ENCODE measurements at regions of chr12 and their contacts with region 1.

Region 1: DNA sequence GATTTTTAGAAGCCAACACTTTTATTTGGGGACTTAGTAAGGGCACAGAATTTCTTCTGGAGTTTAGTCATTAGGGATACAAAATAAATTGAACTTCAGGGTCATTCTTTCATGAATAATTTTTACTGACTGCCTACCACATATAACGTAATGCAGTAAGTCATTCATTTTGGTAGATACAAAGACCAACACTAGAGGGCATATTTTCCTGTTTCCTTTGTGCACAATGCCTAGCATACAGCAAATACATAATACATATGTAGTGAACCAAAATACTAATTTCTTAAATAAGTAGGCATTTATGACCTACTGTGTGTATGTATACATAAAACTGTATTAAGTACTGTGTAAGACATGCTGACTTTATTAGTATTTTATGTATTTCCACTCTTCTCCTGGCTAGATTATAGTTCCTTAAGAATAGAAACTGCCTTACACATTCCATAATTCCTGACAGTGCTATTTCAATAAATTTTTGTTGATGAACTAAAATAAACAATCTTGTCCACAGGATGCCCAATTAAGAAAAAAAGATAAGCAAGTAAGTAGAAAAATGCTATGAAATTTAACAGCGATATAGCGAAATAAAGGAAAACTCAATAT is 47.9 kb downstream of the PPP1R12A start:
- DNase-seq: no peak
- ATAC-seq: peak in 1 of 2 donors; percentile 61
- H3K4me3 ChIP-seq: no peak overlapping the region
- H3K27ac ChIP-seq: no peak overlapping the region
- H3K4me1 ChIP-seq: peaks cover 40 to 56% of the 10 kb centered on the region in 2 donors
- H3K27me3 ChIP-seq: no peaks in the 10 kb centered on the region
- CTCF ChIP-seq: peak; percentile 13 to 61 (median 37)
- POLR2A ChIP-seq: no peak

Region 2: GRCh38 chr12:79194595-79194994 is 692.4 kb before region 1 on chr12:
- in situ Hi-C with region 1: no loop called
- intact Hi-C with region 1: no loop called
- DNase-seq: no peak
- ATAC-seq: no peak
- H3K4me3 ChIP-seq: no peak overlapping the region
- H3K27ac ChIP-seq: no peak overlapping the region
- H3K4me1 ChIP-seq: no peaks in the 10 kb centered on the region
- H3K27me3 ChIP-seq: no peaks in the 10 kb centered on the region
- CTCF ChIP-seq: no peak
- POLR2A ChIP-seq: no peak

Region 3: GRCh38 chr12:79834712-79835376 is 52.2 kb before region 1 on chr12:
- in situ Hi-C with region 1: no loop called
- intact Hi-C with region 1: no loop called
- DNase-seq: no peak
- ATAC-seq: peak in 1 of 2 donors; percentile 8
- H3K4me3 ChIP-seq: no peak overlapping the region
- H3K27ac ChIP-seq: no peak overlapping the region
- H3K4me1 ChIP-seq: peaks cover 15 to 19% of the 10 kb centered on the region in 2 donors
- H3K27me3 ChIP-seq: no peaks in the 10 kb centered on the region
- CTCF ChIP-seq: no peak
- POLR2A ChIP-seq: no peak

Region 4: GRCh38 chr12:79935021-79935623 is 48.1 kb after region 1 on chr12 and contains the start of gene PPP1R12A:
- in situ Hi-C with region 1: no loop called
- intact Hi-C with region 1: loop called (anchors 2 kb)
- DNase-seq: peak; percentile 93 to 94
- ATAC-seq: peak; percentile 91 to 93
- H3K4me3 ChIP-seq: peak within 1 kb of the TSS; percentile 78 to 95 (median 92)
- H3K27ac ChIP-seq: peak within 1 kb of the TSS; percentile 89 to 95 (median 92)
- H3K4me1 ChIP-seq: peaks cover 27 to 40% of the 10 kb centered on the region in 2 donors
- H3K27me3 ChIP-seq: no peaks in the 10 kb centered on the region
- CTCF ChIP-seq: peak in 2 of 5 experiments; percentile 39 to 40
- POLR2A ChIP-seq: peak; percentile 92 to 95
- total RNA-seq, gene PPP1R12A: 38.0 to 65.7 (median 47.2) TPM

Region 5: GRCh38 chr12:80269803-80270552 is 383.0 kb after region 1 on chr12:
- in situ Hi-C with region 1: no loop called
- intact Hi-C with region 1: loop called (anchors 10 kb)
- DNase-seq: no peak
- ATAC-seq: no peak
- H3K4me3 ChIP-seq: no peak overlapping the region
- H3K27ac ChIP-seq: no peak overlapping the region
- H3K4me1 ChIP-seq: no peaks in the 10 kb centered on the region
- H3K27me3 ChIP-seq: no peaks in the 10 kb centered on the region
- CTCF ChIP-seq: peak; percentile 41 to 65 (median 54)
- POLR2A ChIP-seq: no peak